Heart left ventricle (tissue), 16 donors: ENCODE measurements at regions of chr5 and their contacts with region 1.

Region 1: DNA sequence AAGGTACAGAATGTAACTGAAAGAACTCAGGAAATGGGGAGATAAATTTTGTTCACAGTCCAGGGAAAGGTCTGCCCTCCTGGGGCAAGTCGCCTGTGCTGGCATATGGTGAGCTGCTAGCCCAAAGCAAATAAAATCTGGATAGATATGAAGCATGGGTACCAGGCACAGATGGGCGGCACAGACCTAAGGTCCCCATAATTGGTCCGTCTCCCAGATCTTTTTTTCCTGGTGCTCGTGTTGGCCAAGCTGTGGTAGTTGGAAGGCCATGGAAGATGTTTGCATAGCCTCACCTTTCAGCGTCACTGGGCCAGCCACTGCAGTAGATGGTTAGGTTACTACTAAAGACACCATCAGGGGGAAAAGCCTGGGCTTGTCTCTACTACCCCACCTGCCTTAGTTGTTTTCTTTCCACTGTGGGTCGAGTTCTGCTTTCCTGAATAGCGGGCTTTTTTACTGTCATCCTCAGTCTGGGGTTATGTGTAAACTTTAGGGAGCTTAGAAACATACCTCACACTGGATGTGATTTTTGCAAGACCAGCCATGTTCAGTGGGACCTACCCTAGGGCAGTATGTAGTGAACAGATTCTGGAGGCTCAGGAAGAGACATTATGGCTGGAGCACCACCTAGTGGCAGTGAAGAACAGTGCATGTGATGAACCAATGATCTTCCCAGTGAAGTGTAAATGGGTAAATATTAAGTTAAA is 24.2 kb upstream of the GLRX start:
- DNase-seq: peak in 4 of 5 donors; percentile 59 to 70 (median 66)
- ATAC-seq: peak; percentile 26 to 80 (median 74)
- H3K4me3 ChIP-seq: no peak overlapping the region
- H3K27ac ChIP-seq: no peak overlapping the region
- H3K4me1 ChIP-seq: peaks cover 0 to 30% (median 9%) of the 10 kb centered on the region in 12 donors
- H3K27me3 ChIP-seq: no peaks in the 10 kb centered on the region
- CTCF ChIP-seq: peak; percentile 88 to 98 (median 96)
- POLR2A ChIP-seq: no peak

Region 2: DNA sequence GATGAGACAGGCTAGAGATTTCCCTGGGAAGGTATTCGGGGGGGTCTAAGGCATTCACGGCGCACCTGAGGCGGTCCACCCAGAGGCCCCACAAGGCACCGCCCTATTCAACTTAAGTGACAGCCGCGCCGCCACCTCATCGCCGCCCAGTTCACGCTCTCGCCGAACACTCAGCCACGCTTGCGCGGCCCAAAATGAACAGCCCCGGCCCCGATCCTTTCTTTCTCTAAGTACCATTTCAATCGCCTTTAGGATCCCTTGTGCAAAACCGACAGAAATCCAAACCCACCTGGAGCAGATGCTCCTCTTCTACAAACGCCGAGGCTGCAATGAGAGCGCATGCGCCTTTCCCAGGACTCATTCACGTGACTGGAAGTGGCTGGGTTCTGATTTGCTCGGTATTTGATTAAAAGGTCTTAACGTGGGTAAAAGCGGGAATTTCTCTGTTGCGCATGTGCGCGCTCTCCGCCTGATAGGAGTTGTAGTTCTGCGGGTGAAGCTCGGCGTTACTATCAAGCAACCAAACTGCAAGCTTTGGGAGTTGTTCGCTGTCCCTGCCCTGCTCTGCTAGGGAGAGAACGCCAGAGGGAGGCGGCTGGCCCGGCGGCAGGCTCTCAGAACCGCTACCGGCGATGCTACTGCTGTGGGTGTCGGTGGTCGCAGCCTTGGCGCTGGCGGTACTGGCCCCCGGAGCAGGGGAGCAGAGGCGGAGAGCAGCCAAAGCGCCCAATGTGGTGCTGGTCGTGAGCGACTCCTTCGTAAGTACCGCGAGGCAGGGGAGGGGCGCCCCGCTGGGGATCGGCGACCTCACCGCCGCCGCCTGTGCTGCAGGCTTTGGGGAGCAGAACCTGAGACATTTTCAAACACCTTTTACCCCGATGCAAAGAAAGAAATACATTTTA is 291.8 kb before region 1 on chr5 and contains the starts of genes ARSK and SKIC3:
- intact Hi-C with region 1: loop called in 3 of 10 experiments (anchors 10 kb)
- DNase-seq: peak; percentile 93 to 96 (median 95)
- ATAC-seq: peak; percentile 97 to 98 (median 98)
- H3K4me3 ChIP-seq: peak within 1 kb of the TSS; percentile 56 to 92 (median 86)
- H3K27ac ChIP-seq: peak within 1 kb of the TSS; percentile 29 to 94 (median 84)
- H3K4me1 ChIP-seq: peaks cover 3 to 26% (median 14%) of the 10 kb centered on the region in 12 donors
- H3K27me3 ChIP-seq: no peaks in the 10 kb centered on the region
- CTCF ChIP-seq: peak in 10 of 12 donors; percentile 10 to 64 (median 39)
- POLR2A ChIP-seq: peak in 1 of 2 donors; percentile 87
- total RNA-seq, gene ARSK: 2.3 to 5.7 (median 3.5) TPM
- total RNA-seq, gene SKIC3: 40.3 to 80.2 (median 68.9) TPM

Region 3: DNA sequence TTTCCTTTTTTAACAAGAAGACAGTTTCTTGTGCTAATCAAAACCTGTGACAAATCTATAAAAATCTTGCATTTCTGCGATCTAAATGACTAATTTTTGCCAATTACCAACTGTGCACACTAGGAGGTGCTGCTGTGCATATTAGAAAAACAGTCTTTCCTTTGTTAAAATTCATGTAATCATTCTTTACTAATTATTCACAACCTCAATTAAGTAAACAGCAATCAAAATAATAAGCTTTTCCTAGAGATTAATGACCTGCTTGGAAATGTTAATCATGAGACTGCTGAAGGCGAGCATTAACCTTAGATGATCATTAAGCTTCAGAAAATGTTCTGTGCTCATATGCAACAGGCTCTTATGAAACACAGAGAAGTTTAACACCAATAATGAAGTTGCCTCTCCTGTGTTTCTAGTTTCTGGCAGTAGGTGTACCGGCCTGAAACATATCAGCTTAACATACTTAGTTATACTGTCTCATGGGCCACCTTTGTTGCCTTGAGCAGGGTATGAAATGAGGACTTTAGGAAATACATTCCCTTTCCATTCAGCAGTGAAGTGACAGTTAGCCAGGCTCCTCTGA is 182.4 kb before region 1 on chr5:
- intact Hi-C with region 1: loop called in 7 of 10 experiments (anchors 2 to 5 kb)
- DNase-seq: no peak
- ATAC-seq: peak in 2 of 4 donors; percentile 39 to 45
- H3K4me3 ChIP-seq: no peak overlapping the region
- H3K27ac ChIP-seq: peak overlapping the region in 3 of 12 donors; percentile 26 to 37 (median 34)
- H3K4me1 ChIP-seq: peaks cover 0 to 25% (median 9%) of the 10 kb centered on the region in 12 donors
- H3K27me3 ChIP-seq: no peaks in the 10 kb centered on the region
- CTCF ChIP-seq: peak; percentile 65 to 89 (median 83)
- POLR2A ChIP-seq: no peak

Region 4: DNA sequence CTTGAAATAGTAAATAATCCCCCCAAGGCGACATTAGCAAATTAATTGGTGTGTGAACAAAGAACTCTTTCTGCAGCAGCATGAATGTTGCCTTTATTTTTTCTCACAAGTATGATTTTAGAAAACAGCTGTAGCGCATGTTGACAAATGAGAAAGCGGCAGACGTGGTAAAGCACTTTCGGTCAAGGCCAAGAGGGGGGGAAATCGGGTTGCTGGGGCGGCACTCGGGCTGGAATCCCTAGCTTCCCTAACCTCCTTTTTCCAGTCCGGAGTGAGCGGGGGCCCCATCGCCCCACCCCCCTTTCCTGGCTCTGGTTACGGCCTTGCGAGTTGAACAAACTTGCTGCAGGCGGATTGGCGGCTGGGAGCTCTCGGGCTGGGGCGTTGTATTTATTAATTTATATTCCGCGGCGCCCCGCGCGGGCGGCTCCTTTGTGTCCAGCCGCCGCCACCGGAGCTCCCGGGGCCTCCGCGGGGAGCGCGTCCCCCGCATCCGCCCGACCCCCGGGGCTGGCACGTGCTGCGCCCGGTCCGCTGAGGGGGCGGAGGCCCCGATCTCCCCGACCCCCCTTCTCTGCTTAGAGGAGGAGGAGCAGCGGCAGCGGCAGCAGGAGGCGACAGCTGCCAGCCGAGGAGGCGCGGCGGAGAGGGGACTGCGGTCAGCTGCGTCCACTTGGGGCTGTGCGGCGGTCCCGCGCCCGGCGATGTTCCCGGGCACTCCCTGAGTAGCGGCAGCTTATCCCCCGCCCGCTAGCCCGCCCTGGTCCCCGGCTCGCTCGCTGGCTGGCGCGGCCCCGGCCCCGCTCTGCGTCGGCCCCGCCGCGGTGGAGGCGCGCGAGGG is 115.8 kb before region 1 on chr5 and contains the start of gene RHOBTB3:
- intact Hi-C with region 1: loop called in 1 of 10 experiments (anchors 5 kb)
- DNase-seq: peak; percentile 90 to 95 (median 92)
- ATAC-seq: peak; percentile 50 to 88 (median 79)
- H3K4me3 ChIP-seq: peak within 1 kb of the TSS; percentile 62 to 96 (median 76)
- H3K27ac ChIP-seq: peak within 1 kb of the TSS; percentile 84 to 98 (median 94)
- H3K4me1 ChIP-seq: peaks cover 0 to 71% (median 40%) of the 10 kb centered on the region in 12 donors
- H3K27me3 ChIP-seq: no peaks in the 10 kb centered on the region
- CTCF ChIP-seq: peak in 3 of 12 donors; percentile 17 to 22 (median 20)
- POLR2A ChIP-seq: peak in 1 of 2 donors; percentile 74
- total RNA-seq, gene RHOBTB3: 62.9 to 116 (median 86.7) TPM

Region 5: GRCh38 chr5:95781101-95781583 is 65.6 kb before region 1 on chr5:
- intact Hi-C with region 1: loop called (anchors 1 to 2 kb)
- DNase-seq: peak; percentile 80 to 88 (median 82)
- ATAC-seq: peak; percentile 78 to 93 (median 92)
- H3K4me3 ChIP-seq: no peak overlapping the region
- H3K27ac ChIP-seq: peak overlapping the region; percentile 11 to 77 (median 30)
- H3K4me1 ChIP-seq: peaks cover 0 to 52% (median 20%) of the 10 kb centered on the region in 12 donors
- H3K27me3 ChIP-seq: no peaks in the 10 kb centered on the region
- CTCF ChIP-seq: peak; percentile 73 to 97 (median 88)
- POLR2A ChIP-seq: no peak

Region 6: GRCh38 chr5:95788493-95788892 is 58.2 kb before region 1 on chr5:
- intact Hi-C with region 1: loop called in 1 of 10 experiments (anchors 2 kb)
- DNase-seq: no peak
- ATAC-seq: no peak
- H3K4me3 ChIP-seq: no peak overlapping the region
- H3K27ac ChIP-seq: no peak overlapping the region
- H3K4me1 ChIP-seq: peaks cover 0 to 28% (median 10%) of the 10 kb centered on the region in 12 donors
- H3K27me3 ChIP-seq: no peaks in the 10 kb centered on the region
- CTCF ChIP-seq: no peak
- POLR2A ChIP-seq: no peak

Region 7: GRCh38 chr5:95915999-95916686 is 69.4 kb after region 1 on chr5:
- intact Hi-C with region 1: no loop called
- DNase-seq: no peak
- ATAC-seq: peak in 3 of 4 donors; percentile 17 to 54 (median 36)
- H3K4me3 ChIP-seq: no peak overlapping the region
- H3K27ac ChIP-seq: peak overlapping the region in 2 of 12 donors; percentile 22 to 39
- H3K4me1 ChIP-seq: peaks cover 0 to 33% (median 20%) of the 10 kb centered on the region in 12 donors
- H3K27me3 ChIP-seq: no peaks in the 10 kb centered on the region
- CTCF ChIP-seq: no peak
- POLR2A ChIP-seq: no peak